ENCODE measurements at regions of chr20 and their contacts with region 1.

Region 1: GRCh38 chr20:37564388-37565133 is 36.9 kb upstream of the BLCAP start:
- DNase-seq: peak; percentile 62 to 87
- H3K4me3 ChIP-seq: no peak overlapping the region
- H3K4me3 Mint-ChIP-seq: no peak overlapping the region
- H3K27ac Mint-ChIP-seq: peak overlapping the region; percentile 7
- H3K4me1 ChIP-seq: peaks cover 30% of the 10 kb centered on the region
- H3K4me1 Mint-ChIP-seq: peaks cover 16% of the 10 kb centered on the region
- H3K27me3 ChIP-seq: peaks cover 1% of the 10 kb centered on the region; the same call in 1 of the 2 replicates
- H3K27me3 Mint-ChIP-seq: peaks cover 12% of the 10 kb centered on the region
- CTCF ChIP-seq: peak; percentile 99 to 100

Region 2: DNA sequence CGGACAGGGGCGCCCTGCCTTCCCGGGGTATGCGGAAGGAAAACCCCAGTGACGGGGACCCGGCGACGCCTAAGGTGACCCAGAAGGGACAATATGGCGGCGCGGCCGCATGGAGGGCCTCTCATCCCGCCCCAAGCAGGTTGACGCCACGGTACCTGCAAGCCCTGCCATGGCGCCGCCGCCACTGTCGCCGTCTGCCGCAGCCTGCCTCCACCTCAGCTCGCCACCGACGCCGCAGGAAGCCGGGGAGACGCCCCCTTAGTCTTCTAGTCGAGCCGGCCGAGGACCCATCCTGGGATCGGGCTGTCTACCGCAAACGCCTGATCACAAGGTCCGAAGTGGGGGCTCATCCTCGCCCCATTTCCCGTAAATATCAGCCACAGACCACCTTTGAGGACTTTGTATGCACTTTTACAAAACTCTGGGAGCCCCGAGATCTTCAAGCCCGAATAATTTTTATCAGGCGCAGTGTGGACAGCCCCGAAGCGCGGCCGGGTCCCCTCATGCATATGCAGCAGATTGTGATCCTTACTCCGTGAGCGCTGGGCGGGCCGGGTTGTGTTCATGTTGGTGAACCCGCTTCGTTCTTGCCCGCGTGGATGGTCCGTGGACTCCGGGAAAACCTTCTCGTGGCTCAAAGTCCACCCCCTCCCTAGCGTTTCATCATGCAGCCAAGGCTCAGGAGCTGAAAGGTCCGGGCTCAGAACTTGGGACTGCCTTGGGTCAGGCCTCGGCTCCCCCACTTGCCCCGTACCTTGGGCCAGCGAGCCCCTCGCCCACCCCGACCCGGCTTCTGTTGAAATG is 36.7 kb before region 1 on chr20 and contains the start of gene BLCAP:
- CTCF ChIA-PET with region 1: no interaction called
- POLR2A ChIA-PET with region 1: no interaction called
- intact Hi-C with region 1: no loop called
- DNase-seq: peak; percentile 97 to 99
- H3K4me3 ChIP-seq: peak within 1 kb of the TSS; percentile 92
- H3K4me3 Mint-ChIP-seq: peak within 1 kb of the TSS; percentile 79
- H3K27ac Mint-ChIP-seq: peak within 1 kb of the TSS; percentile 98
- H3K4me1 ChIP-seq: peaks cover 36% of the 10 kb centered on the region
- H3K4me1 Mint-ChIP-seq: peaks cover 47% of the 10 kb centered on the region
- H3K27me3 ChIP-seq: no peaks in the 10 kb centered on the region
- H3K27me3 Mint-ChIP-seq: no peaks in the 10 kb centered on the region
- CTCF ChIP-seq: no peak
- total RNA-seq, gene BLCAP: 123 and 129 TPM in 2 replicates

Region 3: GRCh38 chr20:37627060-37627769 is 62.7 kb after region 1 on chr20:
- CTCF ChIA-PET with region 1: no interaction called
- POLR2A ChIA-PET with region 1: no interaction called
- intact Hi-C with region 1: loop called (anchors 2 kb)
- DNase-seq: peak; percentile 81 to 86
- H3K4me3 ChIP-seq: no peak overlapping the region
- H3K4me3 Mint-ChIP-seq: no peak overlapping the region
- H3K27ac Mint-ChIP-seq: no peak overlapping the region
- H3K4me1 ChIP-seq: peaks cover 4% of the 10 kb centered on the region; the same call in 1 of the 2 replicates
- H3K4me1 Mint-ChIP-seq: no peaks in the 10 kb centered on the region
- H3K27me3 ChIP-seq: no peaks in the 10 kb centered on the region
- H3K27me3 Mint-ChIP-seq: peaks cover 21% of the 10 kb centered on the region
- CTCF ChIP-seq: no peak

Region 4: GRCh38 chr20:37758332-37758731 is 193.8 kb after region 1 on chr20:
- CTCF ChIA-PET with region 1: interaction called, 9 read pairs
- POLR2A ChIA-PET with region 1: no interaction called
- intact Hi-C with region 1: loop called (anchors 5 kb)
- DNase-seq: peak; percentile 66 to 72
- H3K4me3 ChIP-seq: no peak overlapping the region
- H3K4me3 Mint-ChIP-seq: no peak overlapping the region
- H3K27ac Mint-ChIP-seq: no peak overlapping the region
- H3K4me1 ChIP-seq: no peaks in the 10 kb centered on the region
- H3K4me1 Mint-ChIP-seq: peaks cover 6% of the 10 kb centered on the region
- H3K27me3 ChIP-seq: no peaks in the 10 kb centered on the region
- H3K27me3 Mint-ChIP-seq: no peaks in the 10 kb centered on the region
- CTCF ChIP-seq: peak; percentile 75 to 78

Region 5: DNA sequence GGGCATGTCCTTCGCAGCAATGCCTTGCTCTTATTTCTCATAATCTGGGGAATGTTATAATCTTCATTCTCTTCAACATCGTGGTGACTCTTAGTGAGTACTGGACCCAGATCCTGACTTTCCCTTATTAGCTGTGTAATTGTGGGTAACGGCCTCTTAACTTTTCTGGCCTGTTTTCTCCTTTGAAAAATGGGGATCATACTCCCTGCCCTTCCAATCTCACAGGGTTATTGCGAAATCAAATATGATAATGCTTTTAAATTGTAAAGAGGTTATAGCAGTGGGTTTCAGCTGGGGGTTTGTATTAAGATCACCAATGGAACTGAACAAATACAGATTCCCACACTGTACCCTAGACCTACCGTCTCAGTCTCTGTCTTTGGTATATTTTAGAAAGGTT is 206.3 kb after region 1 on chr20:
- CTCF ChIA-PET with region 1: no interaction called
- POLR2A ChIA-PET with region 1: no interaction called
- intact Hi-C with region 1: no loop called
- DNase-seq: no peak
- H3K4me3 ChIP-seq: no peak overlapping the region
- H3K4me3 Mint-ChIP-seq: no peak overlapping the region
- H3K27ac Mint-ChIP-seq: no peak overlapping the region
- H3K4me1 ChIP-seq: no peaks in the 10 kb centered on the region
- H3K4me1 Mint-ChIP-seq: no peaks in the 10 kb centered on the region
- H3K27me3 ChIP-seq: no peaks in the 10 kb centered on the region
- H3K27me3 Mint-ChIP-seq: no peaks in the 10 kb centered on the region
- CTCF ChIP-seq: no peak

Region 6: DNA sequence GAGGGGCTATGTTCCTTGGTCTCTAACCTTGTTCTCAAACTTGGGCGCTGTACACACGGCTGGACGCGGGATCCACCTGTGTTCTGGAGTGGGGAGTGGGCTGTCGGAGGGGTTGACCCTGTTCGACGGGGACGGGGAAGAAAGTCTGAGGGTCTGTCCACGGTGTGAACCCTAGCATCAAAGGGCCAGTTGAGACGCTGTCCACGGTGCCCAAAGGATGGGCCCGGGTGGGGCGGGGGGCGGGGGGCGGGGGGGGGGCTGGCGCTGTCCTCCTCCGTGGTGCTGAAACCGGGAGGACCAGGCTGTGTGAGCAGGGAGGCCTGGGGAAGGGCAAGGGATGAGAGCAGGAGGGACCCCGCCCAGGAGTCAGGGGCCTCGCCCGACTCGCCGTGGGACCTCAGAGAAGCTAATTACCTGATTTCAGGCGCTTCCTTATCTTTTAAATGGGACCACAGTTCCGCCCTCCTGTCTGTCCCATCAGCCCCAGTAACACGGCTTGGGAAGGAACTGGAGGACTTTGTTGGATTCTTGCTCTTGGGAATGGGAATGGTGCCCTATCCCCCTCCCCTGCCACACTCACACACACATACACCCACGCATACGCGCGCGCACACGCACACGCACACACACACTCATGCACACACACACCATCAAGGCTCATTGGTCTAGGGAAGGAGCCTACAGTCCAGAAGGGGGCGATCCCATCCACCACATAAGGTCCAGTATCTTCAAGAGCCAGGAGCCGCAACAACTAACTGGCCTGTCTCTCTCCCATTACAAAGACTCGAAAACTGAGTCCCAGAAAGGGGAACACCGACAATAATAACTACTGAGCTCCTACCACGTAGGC is 337.3 kb after region 1 on chr20:
- CTCF ChIA-PET with region 1: no interaction called
- POLR2A ChIA-PET with region 1: no interaction called
- intact Hi-C with region 1: loop called (anchors 5 kb)
- DNase-seq: peak; percentile 64 to 65
- H3K4me3 ChIP-seq: no peak overlapping the region
- H3K4me3 Mint-ChIP-seq: no peak overlapping the region
- H3K27ac Mint-ChIP-seq: no peak overlapping the region
- H3K4me1 ChIP-seq: no peaks in the 10 kb centered on the region
- H3K4me1 Mint-ChIP-seq: peaks cover 6% of the 10 kb centered on the region
- H3K27me3 ChIP-seq: peaks cover 4% of the 10 kb centered on the region
- H3K27me3 Mint-ChIP-seq: peaks cover 25% of the 10 kb centered on the region
- CTCF ChIP-seq: peak; percentile 29 to 45